ENCODE measurements at regions of chr19 and their contacts with region 1.

Region 1: GRCh38 chr19:40444192-40445028 is at the start of gene SERTAD3:
- DNase-seq: peak; percentile 99 to 100
- ATAC-seq: peak; percentile 74 to 84
- H3K4me3 ChIP-seq: peak within 1 kb of the TSS; percentile 80
- H3K27ac ChIP-seq: peak within 1 kb of the TSS; percentile 88 to 97
- H3K4me1 ChIP-seq: peaks cover 23% of the 10 kb centered on the region
- CTCF ChIP-seq: peak; percentile 58
- EP300 ChIP-seq: no peak
- POLR2A ChIP-seq: peak; percentile 97
- RAD21 ChIP-seq: peak; percentile 70 to 74
- polyA plus RNA-seq, gene SERTAD3: 40.2 and 41.7 TPM in 2 replicates

Region 2: GRCh38 chr19:40433391-40434216 is 10.8 kb before region 1 on chr19:
- CTCF ChIA-PET with region 1: interaction called, 950 read pairs
- POLR2A ChIA-PET with region 1: interaction called, 79 read pairs
- DNase-seq: peak; percentile 95 to 98
- ATAC-seq: peak; percentile 95 to 96
- H3K4me3 ChIP-seq: peak overlapping the region; percentile 43
- H3K27ac ChIP-seq: peak overlapping the region; percentile 90 to 95
- H3K4me1 ChIP-seq: peaks cover 28% of the 10 kb centered on the region
- CTCF ChIP-seq: no peak
- EP300 ChIP-seq: no peak
- POLR2A ChIP-seq: peak; percentile 90
- RAD21 ChIP-seq: no peak; a peak in 1 of 5 replicates